CD8-positive, alpha-beta T cell (primary cell): ENCODE measurements at regions of chr1 and their contacts with region 1.

Region 1: DNA sequence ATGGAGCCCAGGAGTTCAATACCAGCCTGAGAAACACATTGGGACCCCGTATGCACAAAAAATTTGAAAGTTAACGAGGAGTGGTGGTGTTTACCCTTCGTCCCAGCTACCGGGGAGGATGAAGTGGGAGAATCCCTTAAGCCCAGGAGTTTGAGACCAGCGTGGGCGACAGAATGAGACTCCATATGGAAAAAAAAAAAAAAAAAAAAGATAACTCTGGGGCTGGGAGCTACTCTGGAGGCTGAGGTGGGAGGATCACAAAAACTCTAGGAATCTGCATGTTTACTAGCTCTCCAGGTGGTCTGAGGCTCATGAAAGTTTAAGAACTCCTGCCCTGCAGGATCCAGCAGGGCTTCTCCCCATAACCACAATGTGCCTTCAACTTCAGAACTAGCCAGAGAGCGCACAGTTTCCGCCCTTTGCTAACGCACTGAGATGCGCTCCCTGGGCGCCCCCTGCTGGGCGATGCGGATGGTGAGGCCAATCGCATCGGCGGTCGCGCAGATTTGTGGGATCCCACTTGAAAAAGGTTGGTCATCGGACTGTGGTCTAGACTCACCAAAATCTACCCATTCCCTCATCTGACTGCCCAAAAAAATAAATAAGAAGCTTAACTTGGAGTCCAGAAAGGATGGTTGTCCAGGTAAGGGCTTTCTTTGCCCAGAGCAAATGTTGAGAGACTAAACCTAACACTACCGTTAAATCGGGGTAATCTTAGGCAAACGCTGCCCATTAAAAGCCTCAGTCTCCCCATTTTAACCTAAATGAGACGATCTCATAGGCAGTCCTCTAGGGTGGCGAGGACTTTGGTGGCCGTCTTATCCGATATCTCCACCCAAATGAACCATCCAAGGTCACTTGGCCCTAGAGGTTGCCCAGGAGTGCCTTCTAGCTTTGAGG is 8.8 kb downstream of the ZNF683 start:
- DNase-seq: peak; percentile 69 to 94 (median 86)
- ATAC-seq: peak; percentile 56
- H3K4me3 ChIP-seq: no peak overlapping the region
- H3K4me3 Mint-ChIP-seq: no peak overlapping the region
- H3K27ac ChIP-seq: no peak overlapping the region
- H3K27ac Mint-ChIP-seq: peak overlapping the region; percentile 66
- H3K4me1 ChIP-seq: peaks cover 56% of the 10 kb centered on the region
- H3K4me1 Mint-ChIP-seq: peaks cover 54% of the 10 kb centered on the region
- H3K27me3 ChIP-seq: peaks cover 0 to 16% of the 10 kb centered on the region in 2 experiments
- H3K27me3 Mint-ChIP-seq: peaks cover 13% of the 10 kb centered on the region
- CTCF ChIP-seq: peak; percentile 97

Region 2: GRCh38 chr1:26284597-26285360 is 79.0 kb before region 1 on chr1:
- CTCF ChIA-PET with region 1: interaction called, 106 read pairs
- POLR2A ChIA-PET with region 1: interaction called, 6 read pairs
- intact Hi-C with region 1: loop called (anchors 2 kb)
- DNase-seq: peak; percentile 82 to 98 (median 94)
- ATAC-seq: peak; percentile 72
- H3K4me3 ChIP-seq: peak overlapping the region; percentile 27 to 28
- H3K4me3 Mint-ChIP-seq: peak overlapping the region; percentile 82
- H3K27ac ChIP-seq: peak overlapping the region; percentile 61 to 76
- H3K27ac Mint-ChIP-seq: peak overlapping the region; percentile 100
- H3K4me1 ChIP-seq: peaks cover 93% of the 10 kb centered on the region
- H3K4me1 Mint-ChIP-seq: peaks cover 92% of the 10 kb centered on the region
- H3K27me3 ChIP-seq: no peaks in the 10 kb centered on the region
- H3K27me3 Mint-ChIP-seq: no peaks in the 10 kb centered on the region
- CTCF ChIP-seq: peak; percentile 46

Region 3: DNA sequence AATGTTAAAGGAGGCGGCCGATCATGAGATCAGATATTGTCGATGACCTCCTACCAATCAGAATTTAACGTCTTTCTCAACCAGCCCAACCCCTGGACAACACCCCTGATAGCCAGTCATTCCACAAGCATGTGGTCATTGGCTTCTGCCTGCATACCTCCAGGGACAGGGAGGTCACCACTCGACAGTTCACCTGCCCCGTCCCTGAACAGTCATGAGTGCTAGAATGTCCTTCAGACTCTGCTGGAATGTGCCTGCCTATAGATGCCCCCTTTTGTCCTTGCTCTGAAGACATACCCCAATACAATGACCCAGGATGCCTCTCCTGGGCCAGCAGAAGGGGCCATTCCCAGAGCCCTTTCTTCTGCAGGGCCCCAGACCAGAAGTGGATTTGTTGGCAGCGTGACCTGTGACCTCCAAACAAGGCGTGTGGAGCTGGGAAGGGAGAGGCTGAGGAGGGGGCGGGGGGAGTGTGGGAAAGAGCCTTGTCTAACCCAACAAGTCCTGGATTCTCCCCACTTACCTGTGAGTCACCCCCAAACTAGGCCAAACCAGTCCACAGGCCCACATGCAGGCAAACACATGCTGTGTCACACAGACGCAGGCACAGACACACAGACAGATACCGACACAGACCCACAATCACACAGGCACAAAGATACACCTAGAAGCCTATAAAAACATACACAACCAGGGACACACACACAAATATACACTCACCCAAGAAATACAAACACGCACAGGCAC is 12.0 kb before region 1 on chr1:
- CTCF ChIA-PET with region 1: interaction called, 35 read pairs
- POLR2A ChIA-PET with region 1: no interaction called
- intact Hi-C with region 1: no loop called
- DNase-seq: no peak
- ATAC-seq: no peak
- H3K4me3 ChIP-seq: no peak overlapping the region
- H3K4me3 Mint-ChIP-seq: no peak overlapping the region
- H3K27ac ChIP-seq: no peak overlapping the region
- H3K27ac Mint-ChIP-seq: no peak overlapping the region
- H3K4me1 ChIP-seq: no peaks in the 10 kb centered on the region
- H3K4me1 Mint-ChIP-seq: no peaks in the 10 kb centered on the region
- H3K27me3 ChIP-seq: peaks cover 0 to 2% of the 10 kb centered on the region in 2 experiments
- H3K27me3 Mint-ChIP-seq: peaks cover 3% of the 10 kb centered on the region
- CTCF ChIP-seq: no peak

Region 4: GRCh38 chr1:26391450-26391849 is 27.7 kb after region 1 on chr1:
- CTCF ChIA-PET with region 1: interaction called, 32 read pairs
- POLR2A ChIA-PET with region 1: interaction called, 4 read pairs
- intact Hi-C with region 1: loop called (anchors 1 to 2 kb)
- DNase-seq: peak in 7 of 9 experiments; percentile 32 to 80 (median 51)
- ATAC-seq: peak; percentile 72
- H3K4me3 ChIP-seq: no peak overlapping the region
- H3K4me3 Mint-ChIP-seq: no peak overlapping the region
- H3K27ac ChIP-seq: no peak overlapping the region
- H3K27ac Mint-ChIP-seq: no peak overlapping the region
- H3K4me1 ChIP-seq: peaks cover 27% of the 10 kb centered on the region
- H3K4me1 Mint-ChIP-seq: peaks cover 30% of the 10 kb centered on the region
- H3K27me3 ChIP-seq: peaks cover 0 to 6% of the 10 kb centered on the region in 2 experiments
- H3K27me3 Mint-ChIP-seq: no peaks in the 10 kb centered on the region
- CTCF ChIP-seq: peak; percentile 44

Region 5: DNA sequence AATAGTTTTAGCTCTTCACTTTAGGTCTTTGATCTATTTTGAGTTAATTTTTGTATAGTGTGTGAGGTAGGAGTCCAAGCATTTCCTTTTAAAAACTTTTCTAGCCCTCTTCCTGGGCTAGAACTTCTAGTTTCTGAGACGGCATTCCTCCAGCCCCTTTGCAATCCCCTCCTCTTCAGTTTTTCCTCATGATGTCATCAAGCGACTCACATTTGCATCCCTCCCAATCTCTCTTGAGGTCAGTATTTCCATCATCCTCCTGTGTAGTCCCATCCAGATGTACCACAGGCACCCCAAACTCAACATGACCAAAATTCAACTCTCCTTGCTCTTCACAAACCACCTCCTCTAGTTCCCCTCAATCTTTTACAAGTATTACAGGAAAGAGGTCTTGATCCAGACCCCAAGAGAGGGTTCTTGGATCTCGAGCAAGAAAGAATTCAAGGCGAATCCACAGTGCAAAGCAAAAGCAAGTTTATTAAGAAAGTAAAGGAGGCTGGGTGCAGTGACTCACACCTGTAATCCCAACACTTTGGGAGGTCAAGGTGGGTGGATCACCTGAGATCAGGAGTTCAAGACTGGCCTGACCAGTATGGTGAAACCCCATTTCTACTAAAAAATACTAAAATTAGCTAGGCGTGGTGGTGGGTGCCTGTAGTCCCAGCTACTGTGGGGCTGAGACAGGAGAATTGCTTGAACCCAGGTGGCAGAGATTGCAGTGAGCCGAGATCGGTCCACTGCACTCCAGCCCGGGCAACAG is 119.3 kb after region 1 on chr1:
- CTCF ChIA-PET with region 1: no interaction called
- POLR2A ChIA-PET with region 1: no interaction called
- intact Hi-C with region 1: no loop called
- DNase-seq: no peak
- ATAC-seq: no peak
- H3K4me3 ChIP-seq: no peak overlapping the region
- H3K4me3 Mint-ChIP-seq: no peak overlapping the region
- H3K27ac ChIP-seq: no peak overlapping the region
- H3K27ac Mint-ChIP-seq: peak overlapping the region; percentile 28
- H3K4me1 ChIP-seq: no peaks in the 10 kb centered on the region
- H3K4me1 Mint-ChIP-seq: peaks cover 2% of the 10 kb centered on the region
- H3K27me3 ChIP-seq: no peaks in the 10 kb centered on the region
- H3K27me3 Mint-ChIP-seq: no peaks in the 10 kb centered on the region
- CTCF ChIP-seq: no peak